Left ventricle myocardium inferior (tissue), 1 donor: ENCODE measurements at regions of chr12 and their contacts with region 1.

Region 1: GRCh38 chr12:63843721-63844390 is 644 bp upstream of the SRGAP1 start:
- DNase-seq: peak; percentile 90
- H3K4me3 ChIP-seq: peak overlapping the region; percentile 93
- H3K27ac ChIP-seq: peak overlapping the region; percentile 95
- H3K4me1 ChIP-seq: peaks cover 36% of the 10 kb centered on the region
- H3K27me3 ChIP-seq: no peaks in the 10 kb centered on the region
- CTCF ChIP-seq: peak; percentile 93

Region 2: DNA sequence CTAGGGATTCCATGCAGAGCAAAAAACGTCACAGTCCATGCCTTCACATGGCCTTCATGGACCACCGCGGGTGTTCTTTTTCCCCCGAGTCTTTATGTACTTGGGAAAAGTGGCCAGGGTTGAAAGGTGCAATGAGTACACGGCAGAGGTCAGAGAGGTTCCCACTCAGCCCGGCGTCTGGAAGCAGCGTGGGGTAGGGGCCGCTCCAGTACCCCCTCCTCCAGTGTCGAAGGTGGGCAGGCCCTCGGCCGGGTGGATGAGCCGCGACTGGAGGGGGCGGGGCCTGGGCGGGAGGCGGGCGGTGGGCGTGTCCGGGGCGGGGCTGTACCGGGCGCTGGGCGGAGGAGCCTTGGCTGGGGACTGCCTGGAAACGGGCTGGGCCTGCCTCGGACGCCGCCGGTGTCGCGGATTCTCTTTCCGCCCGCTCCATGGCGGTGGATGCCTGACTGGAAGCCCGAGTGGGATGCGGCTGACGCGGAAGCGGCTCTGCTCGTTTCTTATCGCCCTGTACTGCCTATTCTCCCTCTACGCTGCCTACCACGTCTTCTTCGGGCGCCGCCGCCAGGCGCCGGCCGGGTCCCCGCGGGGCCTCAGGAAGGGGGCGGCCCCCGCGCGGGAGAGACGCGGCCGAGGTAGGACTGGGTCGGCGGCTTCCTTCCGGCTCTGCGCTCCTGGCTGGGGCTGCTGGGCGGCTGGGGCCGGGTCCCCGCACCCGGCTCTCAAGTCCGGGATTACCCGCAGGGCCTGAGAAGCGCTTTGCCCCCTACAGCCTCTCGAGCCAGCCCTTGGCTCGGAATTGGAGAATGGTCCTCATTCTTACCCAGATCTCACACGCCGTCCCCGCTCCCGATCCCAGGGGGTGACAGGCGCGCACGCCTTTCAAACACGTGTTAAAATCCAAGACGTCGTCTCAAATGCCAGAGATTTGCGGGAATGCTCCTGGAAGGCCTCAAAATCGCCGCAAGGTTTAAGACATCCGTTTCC is 64.1 kb before region 1 on chr12 and contains the start of gene RXYLT1:
- intact Hi-C with region 1: no loop called
- DNase-seq: peak; percentile 86
- H3K4me3 ChIP-seq: peak within 1 kb of the TSS; percentile 83
- H3K27ac ChIP-seq: peak within 1 kb of the TSS; percentile 93
- H3K4me1 ChIP-seq: peaks cover 15% of the 10 kb centered on the region
- H3K27me3 ChIP-seq: no peaks in the 10 kb centered on the region
- CTCF ChIP-seq: peak; percentile 15
- total RNA-seq, gene RXYLT1: 16.7 TPM

Region 3: GRCh38 chr12:64039281-64039871 is 195.5 kb after region 1 on chr12:
- intact Hi-C with region 1: no loop called
- DNase-seq: no peak
- H3K4me3 ChIP-seq: peak overlapping the region; percentile 19
- H3K27ac ChIP-seq: peak overlapping the region; percentile 42
- H3K4me1 ChIP-seq: peaks cover 25% of the 10 kb centered on the region
- H3K27me3 ChIP-seq: no peaks in the 10 kb centered on the region
- CTCF ChIP-seq: no peak

Region 4: GRCh38 chr12:64088431-64089349 is 244.8 kb after region 1 on chr12:
- intact Hi-C with region 1: loop called (anchors 10 kb)
- DNase-seq: peak; percentile 23
- H3K4me3 ChIP-seq: peak overlapping the region; percentile 26
- H3K27ac ChIP-seq: peak overlapping the region; percentile 83
- H3K4me1 ChIP-seq: peaks cover 55% of the 10 kb centered on the region
- H3K27me3 ChIP-seq: no peaks in the 10 kb centered on the region
- CTCF ChIP-seq: no peak

Region 5: GRCh38 chr12:64181504-64182291 is 337.8 kb after region 1 on chr12:
- intact Hi-C with region 1: loop called (anchors 2 kb)
- DNase-seq: peak; percentile 29
- H3K4me3 ChIP-seq: no peak overlapping the region
- H3K27ac ChIP-seq: peak overlapping the region; percentile 56
- H3K4me1 ChIP-seq: peaks cover 15% of the 10 kb centered on the region
- H3K27me3 ChIP-seq: no peaks in the 10 kb centered on the region
- CTCF ChIP-seq: peak; percentile 79